ENCODE measurements at regions of chr5 and their contacts with region 1.

Region 1: DNA sequence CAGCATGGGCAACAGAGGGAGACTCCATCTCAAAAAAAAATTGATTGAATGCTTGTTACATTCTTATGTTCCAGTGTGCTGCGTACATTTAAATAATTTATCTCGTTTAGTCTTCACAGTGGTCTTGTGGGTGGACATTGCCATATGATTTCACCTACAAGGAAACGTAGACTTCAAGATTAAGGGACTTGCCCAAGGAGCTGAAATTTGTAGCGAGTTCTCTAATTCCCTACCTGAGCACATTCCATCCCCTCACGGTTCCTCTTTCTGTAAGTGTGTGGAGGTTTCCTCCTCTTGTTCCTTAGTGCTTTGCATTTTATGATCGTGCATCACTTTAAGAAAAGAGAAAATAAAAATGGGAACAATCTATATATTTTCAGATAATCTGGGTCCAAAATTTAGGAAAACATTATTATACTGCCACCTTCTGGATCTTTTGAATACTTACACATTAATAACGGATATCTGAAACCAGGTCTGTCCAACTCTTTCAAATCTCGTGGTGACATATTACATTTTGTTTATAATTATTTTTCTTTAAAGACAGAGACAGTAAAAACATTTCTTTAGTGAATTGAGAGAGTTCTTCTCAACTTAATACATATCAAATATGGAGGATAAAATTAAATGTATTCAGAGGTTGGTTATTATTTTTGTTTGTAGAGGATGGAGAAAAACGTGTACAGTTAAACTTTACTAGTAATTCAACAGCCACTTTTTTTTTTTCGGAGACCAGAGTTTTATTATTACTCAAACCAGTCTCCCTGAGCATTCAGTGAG is 29.9 kb upstream of the C7 start:
- DNase-seq: peak; percentile 52
- H3K4me3 ChIP-seq: no peak overlapping the region
- H3K27ac ChIP-seq: no peak overlapping the region
- H3K4me1 ChIP-seq: no peaks in the 10 kb centered on the region
- H3K27me3 ChIP-seq: no peaks in the 10 kb centered on the region
- CTCF ChIP-seq: no peak
- POLR2A ChIP-seq: no peak

Region 2: DNA sequence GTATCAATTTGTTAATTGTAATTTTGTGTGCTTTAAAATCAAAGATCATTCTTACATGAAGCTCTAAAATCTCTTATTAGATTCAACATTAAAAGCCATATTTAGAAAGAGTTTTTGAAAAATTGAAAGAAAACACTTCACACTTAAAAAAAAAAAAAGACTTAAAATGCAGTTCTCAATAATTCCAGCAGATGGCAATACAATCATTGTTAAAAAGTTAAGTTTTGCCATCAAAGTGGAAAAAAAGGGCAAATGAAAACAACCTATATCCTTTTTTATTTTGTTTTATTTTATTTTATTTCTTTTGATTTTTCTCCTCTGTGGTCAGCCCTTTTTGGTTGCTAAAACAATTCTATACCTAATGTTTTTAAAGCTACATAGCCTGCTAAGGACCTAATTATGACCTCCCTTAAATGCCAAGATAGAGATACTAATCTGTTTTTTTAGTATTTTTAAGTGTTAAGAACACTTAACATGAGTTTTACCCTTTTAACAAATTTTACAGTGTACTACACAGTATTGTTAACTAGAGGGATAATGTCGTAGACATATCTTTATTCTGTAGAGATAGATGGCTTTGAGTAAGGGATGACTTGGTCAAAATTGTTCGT is 1300.4 kb before region 1 on chr5:
- CTCF ChIA-PET with region 1: interaction called, 5 read pairs
- POLR2A ChIA-PET with region 1: no interaction called
- dilution Hi-C with region 1: no loop called
- intact Hi-C with region 1: loop called (anchors 2 kb)
- DNase-seq: peak; percentile 38
- H3K4me3 ChIP-seq: no peak overlapping the region
- H3K27ac ChIP-seq: no peak overlapping the region
- H3K4me1 ChIP-seq: peaks cover 4% of the 10 kb centered on the region
- H3K27me3 ChIP-seq: no peaks in the 10 kb centered on the region
- CTCF ChIP-seq: peak; percentile 18
- POLR2A ChIP-seq: no peak

Region 3: DNA sequence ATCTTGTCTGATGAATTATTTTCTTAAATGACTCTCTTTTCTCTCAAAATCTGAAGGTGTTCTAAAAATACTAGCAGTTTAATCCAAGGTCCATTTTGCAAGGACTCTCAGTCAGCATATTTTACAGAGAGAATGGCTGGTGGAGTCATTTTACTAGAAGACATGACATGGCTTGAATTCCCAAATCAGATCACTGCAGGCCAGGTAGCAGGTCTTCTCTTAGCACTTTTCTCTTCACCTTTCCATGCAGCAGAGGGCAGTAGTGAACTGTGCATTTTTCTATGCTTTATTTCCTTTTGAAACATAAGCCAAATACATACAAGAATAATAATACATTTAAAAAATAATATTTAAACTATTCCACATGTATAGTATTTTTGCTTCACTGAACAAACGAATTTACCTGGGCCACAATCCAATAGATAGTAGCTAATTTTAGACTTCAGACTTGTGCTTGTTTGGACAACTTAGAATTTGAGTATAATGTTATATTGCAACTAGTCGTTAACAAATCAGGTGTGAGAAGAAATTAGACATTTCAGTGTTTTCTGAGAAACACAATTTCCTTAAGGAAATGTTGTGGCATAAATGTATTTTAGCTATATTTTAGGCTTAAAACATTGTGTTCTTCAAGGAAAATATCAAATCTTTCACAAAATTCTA is 1165.2 kb before region 1 on chr5:
- CTCF ChIA-PET with region 1: interaction called, 7 read pairs
- POLR2A ChIA-PET with region 1: no interaction called
- dilution Hi-C with region 1: no loop called
- intact Hi-C with region 1: loop called (anchors 1 kb)
- DNase-seq: peak; percentile 84
- H3K4me3 ChIP-seq: no peak overlapping the region
- H3K27ac ChIP-seq: no peak overlapping the region
- H3K4me1 ChIP-seq: no peaks in the 10 kb centered on the region
- H3K27me3 ChIP-seq: no peaks in the 10 kb centered on the region
- CTCF ChIP-seq: peak; percentile 42 to 65
- POLR2A ChIP-seq: no peak

Region 4: GRCh38 chr5:40755407-40756365 is 123.7 kb before region 1 on chr5 and contains the start of gene TTC33:
- CTCF ChIA-PET with region 1: no interaction called
- POLR2A ChIA-PET with region 1: no interaction called
- dilution Hi-C with region 1: no loop called
- intact Hi-C with region 1: loop called (anchors 1 kb)
- DNase-seq: peak; percentile 94
- H3K4me3 ChIP-seq: peak within 1 kb of the TSS; percentile 55 to 92 (median 86)
- H3K27ac ChIP-seq: peak within 1 kb of the TSS; percentile 75
- H3K4me1 ChIP-seq: peaks cover 10% of the 10 kb centered on the region
- H3K27me3 ChIP-seq: no peaks in the 10 kb centered on the region
- CTCF ChIP-seq: peak; percentile 72 to 83
- POLR2A ChIP-seq: peak; percentile 20
- total RNA-seq, gene TTC33: 11.7 and 14.2 TPM in 2 replicates

Region 5: GRCh38 chr5:40774623-40775022 is 104.7 kb before region 1 on chr5:
- CTCF ChIA-PET with region 1: no interaction called
- POLR2A ChIA-PET with region 1: no interaction called
- dilution Hi-C with region 1: no loop called
- intact Hi-C with region 1: loop called (anchors 5 kb)
- DNase-seq: no peak
- H3K4me3 ChIP-seq: no peak overlapping the region
- H3K27ac ChIP-seq: no peak overlapping the region
- H3K4me1 ChIP-seq: no peaks in the 10 kb centered on the region
- H3K27me3 ChIP-seq: no peaks in the 10 kb centered on the region
- CTCF ChIP-seq: no peak
- POLR2A ChIP-seq: no peak

Region 6: DNA sequence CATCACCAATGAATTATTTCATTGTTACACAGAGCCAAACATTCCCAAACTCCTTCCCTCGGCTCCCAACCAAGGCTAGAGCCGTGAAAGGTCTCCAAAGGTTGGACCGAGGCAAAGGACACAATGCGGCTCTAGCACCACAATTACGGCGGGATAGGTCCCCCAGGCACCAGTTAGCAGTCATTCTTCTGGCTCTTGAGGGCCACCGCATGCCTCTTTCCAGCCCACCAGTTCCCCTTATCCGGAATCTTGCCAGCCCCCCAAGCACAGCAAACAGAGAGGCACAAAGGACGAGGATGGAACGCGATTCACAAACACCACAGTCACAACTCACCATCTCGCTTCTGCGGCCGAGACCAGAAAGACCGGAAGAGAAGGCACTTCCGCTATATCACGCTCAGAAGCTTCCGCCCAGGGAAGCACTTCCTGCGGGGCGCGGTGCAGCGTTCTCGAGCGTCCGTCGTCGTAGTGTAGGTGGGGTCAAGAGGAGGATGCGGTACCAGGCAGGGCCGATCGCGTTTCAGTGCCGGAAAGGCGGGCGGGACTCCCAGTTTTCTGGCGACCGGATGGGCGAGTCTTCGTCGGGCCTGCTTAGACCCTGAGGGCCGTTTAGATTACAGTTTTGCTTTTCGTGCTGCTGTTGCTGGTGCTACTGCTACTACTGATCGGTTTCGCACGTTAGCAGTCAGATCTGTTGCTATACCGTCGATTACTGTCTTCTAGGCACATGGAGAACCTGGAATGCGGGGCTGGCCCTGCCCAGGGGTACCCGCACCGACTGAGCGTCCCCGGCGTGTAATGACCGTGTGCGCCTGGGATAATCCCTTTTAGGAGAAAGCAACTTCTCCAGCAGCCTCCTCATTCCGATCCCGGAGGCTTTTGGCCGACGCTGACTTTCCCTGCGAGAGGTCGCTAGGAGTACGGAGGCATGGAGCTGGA is 44.2 kb before region 1 on chr5 and contains the start of gene RPL37:
- CTCF ChIA-PET with region 1: no interaction called
- POLR2A ChIA-PET with region 1: no interaction called
- dilution Hi-C with region 1: no loop called
- intact Hi-C with region 1: loop called (anchors 2 kb)
- DNase-seq: peak; percentile 94
- H3K4me3 ChIP-seq: peak within 1 kb of the TSS; percentile 44 to 90 (median 66)
- H3K27ac ChIP-seq: peak within 1 kb of the TSS; percentile 71
- H3K4me1 ChIP-seq: peaks cover 28% of the 10 kb centered on the region
- H3K27me3 ChIP-seq: no peaks in the 10 kb centered on the region
- CTCF ChIP-seq: no peak
- POLR2A ChIP-seq: peak; percentile 99
- total RNA-seq, gene RPL37: 1,348 and 1,380 TPM in 2 replicates